GM18951 (cell line): ENCODE measurements at regions of chr1 and their contacts with region 1.

Region 1: DNA sequence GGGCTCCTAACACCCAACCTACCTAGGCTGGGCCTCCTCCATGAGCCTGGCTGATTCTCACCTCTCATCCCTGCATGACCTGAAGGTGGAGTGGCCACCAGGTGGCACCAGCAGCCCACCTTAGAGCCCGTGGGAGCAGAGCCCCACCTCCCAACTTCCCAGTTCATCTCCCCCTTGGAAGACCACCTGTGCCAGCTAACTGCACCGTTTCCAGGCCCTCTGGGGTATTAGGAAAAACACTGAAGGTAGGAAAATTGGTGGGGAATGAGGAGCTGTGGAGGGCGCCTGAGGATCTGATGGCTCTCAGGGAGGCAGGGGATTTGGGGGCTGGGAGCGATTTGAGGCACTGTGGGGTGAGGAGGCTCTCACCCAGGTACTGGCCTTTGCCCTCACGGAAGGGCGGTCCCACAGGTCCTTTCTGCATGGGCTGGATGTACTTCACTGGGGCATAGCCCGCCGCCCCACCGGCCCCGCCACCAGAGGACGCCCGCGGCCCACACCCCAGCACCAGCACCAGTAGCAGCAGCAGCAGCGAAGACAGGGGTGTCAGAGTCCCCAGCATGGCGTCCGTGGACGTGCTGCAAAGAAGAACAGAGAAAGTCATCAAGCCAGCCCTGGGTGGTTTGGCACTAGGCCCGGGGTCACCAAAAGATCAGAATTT is 11.1 kb downstream of the ADPRS start:
- POLR2A ChIP-seq: no peak

Region 2: GRCh38 chr1:36285448-36286101 is 185.8 kb after region 1 on chr1:
- in situ Hi-C with region 1: loop called (anchors 10 kb)
- POLR2A ChIP-seq: no peak